AG04450 (cell line): ENCODE measurements at regions of chr1 and their contacts with region 1.

Region 1: GRCh38 chr1:91511386-91511785 is 10.7 kb downstream of the CDC7 start:
- DNase-seq: no peak
- H3K4me3 ChIP-seq: no peak overlapping the region
- H3K27ac ChIP-seq: no peak overlapping the region
- H3K27me3 ChIP-seq: no peaks in the 10 kb centered on the region
- CTCF ChIP-seq: peak; percentile 81

Region 2: GRCh38 chr1:91529856-91530255 is 18.5 kb after region 1 on chr1:
- CTCF ChIA-PET with region 1: interaction called, 34 read pairs
- POLR2A ChIA-PET with region 1: no interaction called
- DNase-seq: peak; percentile 20
- H3K4me3 ChIP-seq: no peak overlapping the region
- H3K27ac ChIP-seq: no peak overlapping the region
- H3K27me3 ChIP-seq: no peaks in the 10 kb centered on the region
- CTCF ChIP-seq: peak; percentile 62

Region 3: GRCh38 chr1:91635763-91636162 is 124.4 kb after region 1 on chr1:
- CTCF ChIA-PET with region 1: no interaction called
- POLR2A ChIA-PET with region 1: no interaction called
- DNase-seq: no peak
- H3K4me3 ChIP-seq: no peak overlapping the region
- H3K27ac ChIP-seq: no peak overlapping the region
- H3K27me3 ChIP-seq: no peaks in the 10 kb centered on the region
- CTCF ChIP-seq: no peak

Region 4: DNA sequence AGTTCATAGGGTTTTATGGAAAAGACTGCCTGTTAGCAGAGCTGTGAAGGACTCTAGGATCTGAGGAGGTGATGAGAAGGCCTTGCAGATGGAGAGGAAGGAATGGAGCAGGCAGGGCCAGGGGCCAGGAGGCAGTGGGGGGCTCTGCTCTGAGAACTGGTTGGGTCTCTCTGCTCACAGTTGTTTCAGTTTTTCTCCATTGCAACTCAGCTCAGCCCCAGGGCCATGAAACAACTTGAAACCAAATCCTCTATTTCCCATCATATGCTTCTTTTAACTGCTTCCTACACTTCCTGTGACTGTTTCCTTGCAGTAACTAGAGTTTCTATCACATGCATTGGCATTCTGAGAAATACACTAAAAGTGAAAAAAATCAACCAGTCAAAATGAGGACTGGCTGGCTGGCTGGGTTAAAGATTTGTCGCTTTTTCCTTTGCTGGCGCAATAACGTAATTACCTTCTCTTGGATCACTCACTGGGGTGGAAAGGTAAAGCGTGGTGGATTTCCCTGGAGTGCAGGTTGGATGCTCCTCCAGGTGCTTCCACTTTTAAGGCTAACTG is 161.3 kb after region 1 on chr1:
- CTCF ChIA-PET with region 1: no interaction called
- POLR2A ChIA-PET with region 1: no interaction called
- DNase-seq: no peak
- H3K4me3 ChIP-seq: no peak overlapping the region
- H3K27ac ChIP-seq: peak overlapping the region; percentile 21
- H3K27me3 ChIP-seq: no peaks in the 10 kb centered on the region
- CTCF ChIP-seq: no peak

Region 5: DNA sequence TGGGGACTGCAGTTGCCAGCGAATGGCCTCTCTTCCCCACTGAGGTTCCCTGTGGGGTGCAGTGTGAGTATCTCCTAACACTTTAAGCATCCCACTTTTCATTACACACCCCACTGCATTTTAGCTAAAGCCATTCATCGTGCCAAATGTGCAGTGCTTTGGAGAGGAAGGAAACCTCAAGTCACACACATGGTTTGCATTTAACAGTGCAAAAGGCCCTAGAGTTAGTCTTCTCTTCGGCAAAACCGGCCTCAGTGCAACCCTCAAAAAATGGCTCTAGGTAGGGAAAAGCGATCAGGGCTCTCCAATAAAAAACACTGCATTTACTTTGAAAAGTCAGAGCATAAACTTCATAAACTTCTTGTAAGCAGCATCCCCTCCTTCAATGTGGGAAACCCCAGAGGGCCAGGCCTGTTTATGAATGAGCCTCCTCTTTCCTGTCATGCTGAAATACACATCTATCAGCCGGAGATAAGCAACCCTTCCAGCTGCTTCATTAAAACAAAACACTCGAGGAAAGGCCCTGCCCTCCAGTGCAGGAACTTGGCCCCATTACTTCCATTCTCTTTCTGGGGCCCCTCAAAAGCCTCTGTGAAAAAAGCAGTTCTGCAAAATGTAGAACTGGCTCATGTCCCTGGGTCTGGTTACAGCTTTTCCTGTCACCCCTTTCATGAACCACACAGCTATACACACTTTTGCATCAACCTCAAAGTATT is 173.3 kb after region 1 on chr1:
- CTCF ChIA-PET with region 1: interaction called, 20 read pairs
- POLR2A ChIA-PET with region 1: no interaction called
- DNase-seq: no peak
- H3K4me3 ChIP-seq: no peak overlapping the region
- H3K27ac ChIP-seq: no peak overlapping the region
- H3K27me3 ChIP-seq: no peaks in the 10 kb centered on the region
- CTCF ChIP-seq: no peak

Region 6: GRCh38 chr1:91851130-91852010 is 340.0 kb after region 1 on chr1:
- CTCF ChIA-PET with region 1: interaction called, 11 read pairs
- POLR2A ChIA-PET with region 1: no interaction called
- DNase-seq: peak; percentile 68
- H3K4me3 ChIP-seq: peak overlapping the region; percentile 38
- H3K27ac ChIP-seq: no peak overlapping the region
- H3K27me3 ChIP-seq: no peaks in the 10 kb centered on the region
- CTCF ChIP-seq: no peak

Region 7: GRCh38 chr1:91916046-91916445 is 404.7 kb after region 1 on chr1:
- CTCF ChIA-PET with region 1: interaction called, 12 read pairs
- POLR2A ChIA-PET with region 1: no interaction called
- DNase-seq: no peak
- H3K4me3 ChIP-seq: no peak overlapping the region
- H3K27ac ChIP-seq: no peak overlapping the region
- H3K27me3 ChIP-seq: no peaks in the 10 kb centered on the region
- CTCF ChIP-seq: no peak

Region 8: GRCh38 chr1:91997607-91998195 is 486.3 kb after region 1 on chr1:
- CTCF ChIA-PET with region 1: interaction called, 37 read pairs
- POLR2A ChIA-PET with region 1: no interaction called
- DNase-seq: peak; percentile 30
- H3K4me3 ChIP-seq: no peak overlapping the region
- H3K27ac ChIP-seq: no peak overlapping the region
- H3K27me3 ChIP-seq: no peaks in the 10 kb centered on the region
- CTCF ChIP-seq: peak; percentile 68